Naive thymus-derived CD4-positive, alpha-beta T cell (primary cell): ENCODE measurements at regions of chr9 and their contacts with region 1.

Region 1: GRCh38 chr9:71955300-71955915 is 44.0 kb downstream of the C9orf85 start:
- DNase-seq: no peak
- ATAC-seq: no peak
- H3K4me3 ChIP-seq: no peak overlapping the region
- H3K4me3 Mint-ChIP-seq: no peak overlapping the region
- H3K27ac ChIP-seq: no peak overlapping the region
- H3K27ac Mint-ChIP-seq: no peak overlapping the region
- H3K4me1 ChIP-seq: no peaks in the 10 kb centered on the region
- H3K4me1 Mint-ChIP-seq: peaks cover 0 to 3% (median 0%) of the 10 kb centered on the region in 7 donors
- H3K27me3 ChIP-seq: no peaks in the 10 kb centered on the region
- H3K27me3 Mint-ChIP-seq: no peaks in the 10 kb centered on the region

Region 2: DNA sequence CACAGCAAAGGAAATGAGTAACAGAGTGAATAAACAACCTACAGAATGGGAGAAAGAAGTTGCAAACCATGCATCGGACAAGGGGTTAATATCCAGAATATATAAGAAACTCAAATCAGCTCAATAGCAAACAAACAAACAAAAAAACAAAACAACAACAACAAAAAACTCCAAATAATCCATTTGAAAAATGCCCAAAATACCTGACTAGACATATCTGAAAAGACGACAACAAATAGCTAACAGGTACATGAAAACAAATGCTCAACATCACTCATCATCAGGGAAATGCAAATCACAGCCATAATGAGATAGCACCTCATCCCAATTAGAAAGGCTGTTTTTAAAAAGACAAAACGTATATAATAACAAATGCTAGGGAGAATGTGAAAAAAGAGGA is 945.1 kb before region 1 on chr9:
- CTCF ChIA-PET with region 1: no interaction called
- POLR2A ChIA-PET with region 1: interaction called, 11 read pairs
- intact Hi-C with region 1: no loop called
- DNase-seq: no peak
- ATAC-seq: no peak
- H3K4me3 ChIP-seq: no peak overlapping the region
- H3K4me3 Mint-ChIP-seq: no peak overlapping the region
- H3K27ac ChIP-seq: no peak overlapping the region
- H3K27ac Mint-ChIP-seq: no peak overlapping the region
- H3K4me1 ChIP-seq: no peaks in the 10 kb centered on the region
- H3K4me1 Mint-ChIP-seq: no peaks in the 10 kb centered on the region
- H3K27me3 ChIP-seq: no peaks in the 10 kb centered on the region
- H3K27me3 Mint-ChIP-seq: no peaks in the 10 kb centered on the region